AG04450 (cell line): ENCODE measurements at regions of chr1 and their contacts with region 1.

Region 1: GRCh38 chr1:26417111-26417759 is 6.6 kb downstream of the LIN28A start:
- DNase-seq: peak; percentile 21
- H3K4me3 ChIP-seq: no peak overlapping the region
- H3K27ac ChIP-seq: no peak overlapping the region
- H3K27me3 ChIP-seq: peaks cover 57% of the 10 kb centered on the region
- CTCF ChIP-seq: peak; percentile 92

Region 2: DNA sequence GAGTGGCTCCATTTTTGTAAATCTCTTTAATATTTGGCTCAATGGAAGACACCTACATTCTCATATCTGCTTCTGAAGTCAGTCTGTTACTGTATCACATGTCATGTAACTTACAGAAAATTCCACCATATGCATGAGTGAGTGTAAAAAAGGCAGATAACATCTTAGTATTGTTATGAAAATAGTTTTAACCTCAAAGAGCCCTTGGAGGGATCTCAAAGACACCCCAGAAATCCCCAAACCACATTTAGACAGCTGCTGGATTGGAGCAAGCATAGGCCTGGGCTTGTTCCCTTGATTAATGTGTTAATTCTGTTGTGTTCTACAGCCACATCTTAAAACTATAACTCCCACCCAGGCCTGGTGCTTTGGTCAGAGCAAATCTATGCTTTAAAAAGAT is 969.7 kb before region 1 on chr1:
- CTCF ChIA-PET with region 1: no interaction called
- POLR2A ChIA-PET with region 1: no interaction called
- DNase-seq: no peak
- H3K4me3 ChIP-seq: no peak overlapping the region
- H3K27ac ChIP-seq: no peak overlapping the region
- H3K27me3 ChIP-seq: no peaks in the 10 kb centered on the region
- CTCF ChIP-seq: no peak

Region 3: GRCh38 chr1:26275580-26276431 is 141.4 kb before region 1 on chr1:
- CTCF ChIA-PET with region 1: interaction called, 24 read pairs
- POLR2A ChIA-PET with region 1: no interaction called
- DNase-seq: peak; percentile 77
- H3K4me3 ChIP-seq: no peak overlapping the region
- H3K27ac ChIP-seq: peak overlapping the region; percentile 61
- H3K27me3 ChIP-seq: no peaks in the 10 kb centered on the region
- CTCF ChIP-seq: peak; percentile 78

Region 4: DNA sequence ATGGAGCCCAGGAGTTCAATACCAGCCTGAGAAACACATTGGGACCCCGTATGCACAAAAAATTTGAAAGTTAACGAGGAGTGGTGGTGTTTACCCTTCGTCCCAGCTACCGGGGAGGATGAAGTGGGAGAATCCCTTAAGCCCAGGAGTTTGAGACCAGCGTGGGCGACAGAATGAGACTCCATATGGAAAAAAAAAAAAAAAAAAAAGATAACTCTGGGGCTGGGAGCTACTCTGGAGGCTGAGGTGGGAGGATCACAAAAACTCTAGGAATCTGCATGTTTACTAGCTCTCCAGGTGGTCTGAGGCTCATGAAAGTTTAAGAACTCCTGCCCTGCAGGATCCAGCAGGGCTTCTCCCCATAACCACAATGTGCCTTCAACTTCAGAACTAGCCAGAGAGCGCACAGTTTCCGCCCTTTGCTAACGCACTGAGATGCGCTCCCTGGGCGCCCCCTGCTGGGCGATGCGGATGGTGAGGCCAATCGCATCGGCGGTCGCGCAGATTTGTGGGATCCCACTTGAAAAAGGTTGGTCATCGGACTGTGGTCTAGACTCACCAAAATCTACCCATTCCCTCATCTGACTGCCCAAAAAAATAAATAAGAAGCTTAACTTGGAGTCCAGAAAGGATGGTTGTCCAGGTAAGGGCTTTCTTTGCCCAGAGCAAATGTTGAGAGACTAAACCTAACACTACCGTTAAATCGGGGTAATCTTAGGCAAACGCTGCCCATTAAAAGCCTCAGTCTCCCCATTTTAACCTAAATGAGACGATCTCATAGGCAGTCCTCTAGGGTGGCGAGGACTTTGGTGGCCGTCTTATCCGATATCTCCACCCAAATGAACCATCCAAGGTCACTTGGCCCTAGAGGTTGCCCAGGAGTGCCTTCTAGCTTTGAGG is 53.4 kb before region 1 on chr1:
- CTCF ChIA-PET with region 1: interaction called, 30 read pairs
- POLR2A ChIA-PET with region 1: no interaction called
- DNase-seq: peak; percentile 15
- H3K4me3 ChIP-seq: no peak overlapping the region
- H3K27ac ChIP-seq: no peak overlapping the region
- H3K27me3 ChIP-seq: peaks cover 56% of the 10 kb centered on the region
- CTCF ChIP-seq: peak; percentile 97

Region 5: GRCh38 chr1:26391450-26391849 is 25.8 kb before region 1 on chr1:
- CTCF ChIA-PET with region 1: interaction called, 11 read pairs
- POLR2A ChIA-PET with region 1: no interaction called
- DNase-seq: no peak
- H3K4me3 ChIP-seq: no peak overlapping the region
- H3K27ac ChIP-seq: no peak overlapping the region
- H3K27me3 ChIP-seq: peaks cover 2% of the 10 kb centered on the region
- CTCF ChIP-seq: peak; percentile 90

Region 6: GRCh38 chr1:26431979-26432695 is 14.9 kb after region 1 on chr1 and contains the start of gene DHDDS:
- CTCF ChIA-PET with region 1: interaction called, 23 read pairs
- POLR2A ChIA-PET with region 1: no interaction called
- DNase-seq: peak; percentile 96
- H3K4me3 ChIP-seq: peak within 1 kb of the TSS; percentile 87
- H3K27ac ChIP-seq: peak within 1 kb of the TSS; percentile 63
- H3K27me3 ChIP-seq: peaks cover 4% of the 10 kb centered on the region
- CTCF ChIP-seq: no peak
- polyA plus RNA-seq, gene DHDDS: 45.0 and 51.7 TPM in 2 replicates

Region 7: DNA sequence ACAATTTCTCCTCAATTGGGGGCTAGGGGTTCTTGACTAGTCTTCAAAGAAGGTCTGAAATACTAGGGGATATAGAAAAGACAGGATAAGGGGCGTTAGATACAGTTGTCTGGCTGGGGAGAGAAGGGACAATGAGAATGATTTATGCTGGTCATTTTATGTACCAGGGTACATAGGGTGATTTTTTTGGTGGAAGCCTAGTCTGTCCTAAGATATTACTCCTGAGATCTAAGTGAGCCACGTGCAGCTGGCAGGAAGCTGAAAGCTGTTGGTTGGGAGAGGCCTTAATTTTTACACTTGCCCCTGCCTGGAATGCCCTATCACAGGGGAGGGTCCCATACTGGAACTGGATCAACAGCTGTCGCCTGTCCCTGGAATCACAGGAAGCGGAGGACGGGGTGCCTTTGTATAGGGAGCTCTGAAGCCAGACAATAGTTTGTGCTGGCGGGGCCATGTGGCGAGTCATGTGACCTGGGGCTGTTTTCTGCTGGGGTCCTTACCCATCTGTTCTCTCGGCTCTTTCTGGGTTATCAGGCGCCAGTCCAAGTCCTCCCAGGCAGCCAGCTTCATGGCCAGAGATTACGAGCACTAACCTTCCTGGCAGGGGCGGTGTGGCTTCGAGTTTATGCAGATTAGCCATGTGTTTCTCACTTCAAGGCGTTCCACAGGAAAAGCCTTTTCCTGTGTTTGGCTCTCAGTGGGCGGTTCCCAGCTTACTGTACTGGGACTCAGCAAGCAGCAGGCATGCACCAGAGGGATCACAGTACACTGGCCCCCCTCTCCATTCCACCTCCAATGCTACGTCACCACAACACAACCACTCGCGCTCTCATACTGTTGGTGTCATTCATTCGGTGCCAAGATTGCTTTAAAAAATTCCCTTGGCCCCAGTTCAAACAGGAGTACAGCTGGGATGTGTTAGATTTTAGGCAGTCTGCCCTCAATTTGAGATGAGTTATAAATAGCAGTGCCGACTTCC is 306.1 kb after region 1 on chr1:
- CTCF ChIA-PET with region 1: no interaction called
- POLR2A ChIA-PET with region 1: no interaction called
- DNase-seq: peak; percentile 96
- H3K4me3 ChIP-seq: no peak overlapping the region
- H3K27ac ChIP-seq: peak overlapping the region; percentile 68
- H3K27me3 ChIP-seq: no peaks in the 10 kb centered on the region
- CTCF ChIP-seq: no peak